Activated CD4-positive, alpha-beta T cell treated with anti-CD3 and anti-CD28 coated beads, Interleukin-2, amount 10 ng/mL, durations not matched to agents 7 days and 5 days (primary cell): ENCODE measurements at regions of chr17 and their contacts with region 1.

Region 1: DNA sequence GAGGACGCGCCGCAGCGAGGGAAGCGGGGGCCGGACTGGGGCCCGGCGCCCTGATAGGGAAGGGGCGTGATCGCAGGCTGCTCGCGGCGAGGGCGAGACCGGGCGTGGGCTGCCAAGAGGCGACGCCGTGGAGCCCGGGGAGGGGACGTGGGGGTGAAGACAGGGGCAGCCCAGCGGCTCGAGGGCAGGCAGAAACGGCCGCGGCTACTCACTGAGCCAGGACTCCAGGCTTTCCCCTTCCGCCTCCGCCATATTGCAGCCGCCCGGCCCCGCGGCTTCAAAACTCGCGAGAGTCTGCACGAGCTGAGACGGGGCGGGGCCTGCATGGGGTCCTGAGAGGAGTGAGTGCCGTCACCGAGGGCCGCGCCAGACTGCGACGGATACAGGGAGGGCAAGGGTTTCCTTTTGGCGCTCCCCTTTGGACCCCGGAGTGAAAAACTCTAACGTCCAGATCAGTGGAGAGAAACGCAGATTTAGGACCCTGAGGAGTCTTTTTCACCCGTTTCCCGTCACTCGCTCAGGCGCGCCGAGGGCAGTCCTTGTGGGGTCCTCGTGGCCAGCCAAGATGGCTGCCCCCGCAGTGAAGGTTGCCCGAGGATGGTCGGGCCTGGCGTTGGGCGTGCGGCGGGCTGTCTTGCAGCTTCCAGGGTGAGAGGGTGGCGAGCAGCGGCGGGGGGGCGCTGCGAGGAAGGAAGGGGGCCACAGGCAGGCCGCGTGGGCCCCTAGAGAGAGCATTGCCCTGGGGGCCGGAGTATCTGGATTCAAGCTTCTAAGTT is at the starts of genes GGA3 and MRPS7:
- DNase-seq: peak; percentile 97
- H3K4me3 Mint-ChIP-seq: peak within 1 kb of the TSS; percentile 99
- H3K27ac Mint-ChIP-seq: peak within 1 kb of the TSS; percentile 100
- H3K4me1 Mint-ChIP-seq: peaks cover 49% of the 10 kb centered on the region
- H3K27me3 Mint-ChIP-seq: no peaks in the 10 kb centered on the region
- total RNA-seq, gene GGA3: 80.2 to 86.1 TPM
- total RNA-seq, gene MRPS7: 35.4 to 38.2 TPM

Region 2: DNA sequence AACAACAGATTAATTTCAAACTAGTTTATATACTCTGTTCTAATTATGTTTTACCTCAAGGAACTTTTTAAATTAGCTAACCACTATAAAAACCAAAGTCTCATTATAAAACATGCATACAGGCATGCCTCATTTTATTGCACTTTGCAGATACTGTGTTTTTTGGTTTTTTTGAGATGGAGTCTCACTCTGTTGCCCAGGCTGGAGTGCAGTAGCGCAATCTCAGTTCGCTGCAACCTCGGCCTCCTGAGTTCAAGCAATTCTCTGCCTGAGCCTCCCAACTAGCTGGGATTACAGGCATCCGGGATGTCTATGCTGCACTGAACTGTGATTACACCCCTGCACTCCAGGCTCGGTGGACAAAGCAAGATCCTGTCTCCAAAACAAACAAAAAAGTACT is 98.5 kb before region 1 on chr17:
- CTCF ChIA-PET with region 1: no interaction called
- POLR2A ChIA-PET with region 1: no interaction called
- DNase-seq: no peak
- H3K4me3 Mint-ChIP-seq: no peak overlapping the region
- H3K27ac Mint-ChIP-seq: no peak overlapping the region
- H3K4me1 Mint-ChIP-seq: no peaks in the 10 kb centered on the region
- H3K27me3 Mint-ChIP-seq: no peaks in the 10 kb centered on the region

Region 3: DNA sequence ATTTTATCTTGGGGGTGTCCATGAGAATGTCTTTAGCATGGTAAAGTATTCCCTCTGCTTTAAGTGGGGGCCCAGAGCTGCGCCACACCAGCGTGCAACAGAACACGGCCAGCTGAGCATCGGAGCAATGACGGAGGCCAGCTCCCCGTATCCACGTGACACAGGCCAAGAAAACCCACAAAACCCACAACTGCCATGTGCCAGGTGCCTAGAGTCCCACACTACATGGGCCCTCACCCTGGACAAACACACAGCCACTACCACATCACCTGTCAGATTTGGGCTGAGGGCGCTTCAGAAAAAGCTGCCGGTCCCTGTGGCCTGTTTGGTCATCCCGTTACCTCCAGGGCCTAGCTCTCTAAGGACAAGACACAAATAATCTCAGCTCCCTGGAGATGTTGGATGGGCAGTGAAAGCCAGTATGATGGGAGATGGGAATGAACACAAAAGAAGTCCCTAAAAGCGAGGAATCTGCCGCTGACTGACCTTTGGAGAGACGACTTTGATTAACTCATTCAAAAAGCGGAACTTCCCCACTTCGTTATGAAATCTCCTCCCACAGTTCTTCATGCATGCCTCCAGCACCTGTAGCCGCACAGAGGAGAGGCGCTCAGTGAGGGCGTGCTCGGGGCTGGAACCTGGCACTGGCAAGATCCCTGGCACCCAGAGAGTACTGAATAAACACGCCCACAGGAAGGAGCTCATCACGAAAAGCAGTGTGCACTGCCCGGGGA is 17.2 kb before region 1 on chr17:
- CTCF ChIA-PET with region 1: interaction called, 21 read pairs
- POLR2A ChIA-PET with region 1: interaction called, 13 read pairs
- DNase-seq: no peak
- H3K4me3 Mint-ChIP-seq: no peak overlapping the region
- H3K27ac Mint-ChIP-seq: no peak overlapping the region
- H3K4me1 Mint-ChIP-seq: peaks cover 45% of the 10 kb centered on the region
- H3K27me3 Mint-ChIP-seq: no peaks in the 10 kb centered on the region

Region 4: GRCh38 chr17:75250009-75250471 is 11.5 kb before region 1 on chr17:
- CTCF ChIA-PET with region 1: interaction called, 21 read pairs
- POLR2A ChIA-PET with region 1: interaction called, 13 read pairs
- DNase-seq: peak; percentile 69
- H3K4me3 Mint-ChIP-seq: peak overlapping the region; percentile 56
- H3K27ac Mint-ChIP-seq: peak overlapping the region; percentile 84
- H3K4me1 Mint-ChIP-seq: peaks cover 57% of the 10 kb centered on the region
- H3K27me3 Mint-ChIP-seq: no peaks in the 10 kb centered on the region

Region 5: GRCh38 chr17:75345514-75346167 is 84.1 kb after region 1 on chr17:
- CTCF ChIA-PET with region 1: no interaction called
- POLR2A ChIA-PET with region 1: no interaction called
- DNase-seq: peak; percentile 68
- H3K4me3 Mint-ChIP-seq: peak overlapping the region; percentile 65
- H3K27ac Mint-ChIP-seq: peak overlapping the region; percentile 87
- H3K4me1 Mint-ChIP-seq: peaks cover 90% of the 10 kb centered on the region
- H3K27me3 Mint-ChIP-seq: no peaks in the 10 kb centered on the region